HEK293 (cell line): ENCODE measurements at regions of chr20 and their contacts with region 1.

Region 1: GRCh38 chr20:10090588-10091166 is 55.9 kb downstream of the ANKEF1 start:
- H3K4me3 ChIP-seq: no peak overlapping the region
- H3K27ac ChIP-seq: no peak overlapping the region
- H3K4me1 ChIP-seq: peaks cover 6% of the 10 kb centered on the region
- CTCF ChIP-seq: no peak

Region 2: GRCh38 chr20:9616833-9617489 is 473.7 kb before region 1 on chr20:
- CTCF ChIA-PET with region 1: interaction called, 15 read pairs
- POLR2A ChIA-PET with region 1: no interaction called
- H3K4me3 ChIP-seq: no peak overlapping the region
- H3K27ac ChIP-seq: no peak overlapping the region
- H3K4me1 ChIP-seq: no peaks in the 10 kb centered on the region
- CTCF ChIP-seq: 0 out of 2 replicates have a peak, but pooled peaks have one; percentile 10

Region 3: GRCh38 chr20:9978397-9979004 is 112.2 kb before region 1 on chr20:
- CTCF ChIA-PET with region 1: interaction called, 126 read pairs
- POLR2A ChIA-PET with region 1: no interaction called
- H3K4me3 ChIP-seq: no peak overlapping the region
- H3K27ac ChIP-seq: no peak overlapping the region
- H3K4me1 ChIP-seq: 0 out of 2 replicates have a peak, but pooled peaks cover 2% of the 10 kb centered on the region
- CTCF ChIP-seq: peak; percentile 82; the same call in 1 of the 2 replicates

Region 4: GRCh38 chr20:10077081-10077471 is 13.6 kb before region 1 on chr20:
- CTCF ChIA-PET with region 1: interaction called, 46 read pairs
- POLR2A ChIA-PET with region 1: no interaction called
- H3K4me3 ChIP-seq: no peak overlapping the region
- H3K27ac ChIP-seq: no peak overlapping the region
- H3K4me1 ChIP-seq: no peaks in the 10 kb centered on the region
- CTCF ChIP-seq: no peak

Region 5: DNA sequence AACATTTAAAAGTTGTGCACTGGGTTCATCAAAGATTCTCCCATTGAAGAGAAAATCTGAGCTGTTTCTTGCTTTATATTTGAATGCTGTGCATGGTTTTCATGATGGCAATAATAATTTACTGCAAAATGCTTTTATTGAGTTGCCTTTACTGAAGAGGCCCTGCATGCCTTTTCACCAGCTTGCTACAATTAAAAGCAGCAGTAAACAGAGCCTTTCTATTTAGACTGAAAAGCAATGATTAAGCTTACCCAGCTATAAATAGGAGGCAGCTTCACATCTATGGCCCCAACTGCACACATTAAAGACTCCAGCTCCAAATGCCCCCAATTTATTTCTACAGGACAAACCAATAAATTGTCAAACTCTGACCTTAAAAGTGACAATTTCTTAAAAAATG is 14.4 kb after region 1 on chr20:
- CTCF ChIA-PET with region 1: interaction called, 13 read pairs
- POLR2A ChIA-PET with region 1: no interaction called
- H3K4me3 ChIP-seq: no peak overlapping the region
- H3K27ac ChIP-seq: no peak overlapping the region
- H3K4me1 ChIP-seq: no peaks in the 10 kb centered on the region
- CTCF ChIP-seq: no peak

Region 6: GRCh38 chr20:10111139-10111958 is 20.7 kb after region 1 on chr20:
- CTCF ChIA-PET with region 1: interaction called, 17 read pairs
- POLR2A ChIA-PET with region 1: no interaction called
- H3K4me3 ChIP-seq: no peak overlapping the region
- H3K27ac ChIP-seq: no peak overlapping the region
- H3K4me1 ChIP-seq: no peaks in the 10 kb centered on the region
- CTCF ChIP-seq: no peak

Region 7: GRCh38 chr20:10427060-10427692 is 336.5 kb after region 1 on chr20:
- CTCF ChIA-PET with region 1: interaction called, 15 read pairs
- POLR2A ChIA-PET with region 1: no interaction called
- H3K4me3 ChIP-seq: no peak overlapping the region
- H3K27ac ChIP-seq: no peak overlapping the region
- H3K4me1 ChIP-seq: no peaks in the 10 kb centered on the region
- CTCF ChIP-seq: no peak